Activated CD4-positive, alpha-beta T cell treated with anti-CD3 and anti-CD28 coated beads for 36 hours (primary cell): ENCODE measurements at regions of chr5 and their contacts with region 1.

Region 1: GRCh38 chr5:138503487-138504270 is 38.4 kb downstream of the EGR1 start:
- DNase-seq: peak; percentile 44
- ATAC-seq: peak; percentile 79
- H3K4me3 Mint-ChIP-seq: no peak overlapping the region
- H3K27ac Mint-ChIP-seq: no peak overlapping the region
- H3K4me1 Mint-ChIP-seq: no peaks in the 10 kb centered on the region
- H3K27me3 Mint-ChIP-seq: no peaks in the 10 kb centered on the region

Region 2: DNA sequence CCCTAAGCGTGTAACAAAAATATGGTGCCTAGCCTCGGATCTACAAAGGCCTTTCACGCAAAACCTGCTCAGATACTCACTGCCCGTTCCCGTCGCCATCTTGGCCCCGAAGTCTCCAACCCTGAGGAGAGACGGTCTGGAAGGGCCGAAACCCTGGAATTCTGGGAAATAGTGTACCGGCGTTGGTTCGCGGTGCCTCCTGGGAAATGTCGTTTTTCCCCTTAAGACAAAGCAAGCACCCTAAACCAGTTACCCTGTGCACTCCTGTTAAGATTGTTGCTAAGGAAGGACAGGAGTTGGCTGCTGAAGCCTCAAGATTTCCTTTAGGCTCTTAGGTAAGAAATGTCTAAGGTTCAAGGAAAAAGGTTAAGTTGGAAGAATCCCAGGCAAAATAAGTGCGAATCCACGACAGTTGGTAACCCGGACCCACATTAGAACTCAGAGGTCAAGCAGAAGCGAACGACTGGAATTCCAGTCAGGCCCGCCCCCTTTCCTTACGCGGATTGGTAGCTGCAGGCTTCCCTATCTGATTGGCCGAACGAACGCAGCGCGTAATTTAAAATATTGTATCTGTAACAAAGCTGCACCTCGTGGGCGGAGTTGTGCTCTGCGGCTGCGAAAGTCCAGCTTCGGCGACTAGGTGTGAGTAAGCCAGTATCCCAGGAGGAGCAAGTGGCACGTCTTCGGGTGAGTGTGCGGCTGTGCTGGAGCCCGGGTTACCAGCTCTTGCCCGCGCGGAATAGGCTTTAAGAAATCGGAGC is 325.0 kb before region 1 on chr5 and contains the starts of genes BRD8 and KIF20A:
- CTCF ChIA-PET with region 1: interaction called, 3 read pairs
- POLR2A ChIA-PET with region 1: no interaction called
- intact Hi-C with region 1: loop called in 1 of 2 experiments (anchors 1 kb)
- DNase-seq: peak; percentile 96
- ATAC-seq: peak; percentile 93
- H3K4me3 Mint-ChIP-seq: no peak within 1 kb of the TSS
- H3K27ac Mint-ChIP-seq: peak within 1 kb of the TSS; percentile 73
- H3K4me1 Mint-ChIP-seq: peaks cover 16% of the 10 kb centered on the region
- H3K27me3 Mint-ChIP-seq: no peaks in the 10 kb centered on the region
- total RNA-seq, gene BRD8: 60.7 to 61.4 TPM
- total RNA-seq, gene KIF20A: 66.6 to 76.3 TPM

Region 3: DNA sequence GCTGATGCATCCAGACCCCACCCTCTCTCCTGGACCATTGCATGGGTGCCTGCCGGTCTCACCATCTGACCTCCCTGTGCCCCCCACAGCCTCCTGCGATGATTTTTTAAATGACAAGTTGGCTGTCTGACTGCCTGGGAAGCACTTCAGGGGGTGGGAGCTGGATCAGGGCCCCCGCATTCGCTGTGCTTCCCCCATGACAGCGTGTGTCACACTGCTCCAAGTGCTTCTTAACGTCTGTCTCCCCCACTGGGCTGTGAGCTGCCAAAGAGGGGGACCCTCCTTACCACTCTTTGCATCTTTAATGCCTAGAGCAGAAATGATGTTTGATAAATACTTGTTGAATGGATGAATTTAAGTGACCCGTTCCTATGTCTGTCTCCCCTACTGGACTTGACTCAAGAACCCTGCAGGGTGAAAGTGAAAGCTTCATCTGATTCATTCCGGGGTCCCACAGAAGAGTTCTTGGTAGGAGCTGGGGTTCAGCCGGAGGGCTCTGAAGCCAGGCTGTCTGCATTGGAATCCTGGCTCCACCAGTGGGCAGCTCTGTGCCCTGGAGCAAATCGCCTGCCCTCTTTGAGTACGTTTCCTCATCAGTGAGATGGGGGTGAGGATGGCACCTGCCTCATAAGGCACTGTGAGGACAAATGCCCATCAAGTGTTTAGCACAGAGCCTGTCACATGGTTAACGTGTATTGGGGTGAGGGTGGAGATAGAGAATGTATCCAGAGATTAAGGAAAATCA is 46.0 kb before region 1 on chr5:
- CTCF ChIA-PET with region 1: interaction called, 62 read pairs
- POLR2A ChIA-PET with region 1: no interaction called
- intact Hi-C with region 1: no loop called
- DNase-seq: peak; percentile 26
- ATAC-seq: no peak
- H3K4me3 Mint-ChIP-seq: peak overlapping the region; percentile 32
- H3K27ac Mint-ChIP-seq: peak overlapping the region; percentile 73
- H3K4me1 Mint-ChIP-seq: peaks cover 44% of the 10 kb centered on the region
- H3K27me3 Mint-ChIP-seq: no peaks in the 10 kb centered on the region

Region 4: DNA sequence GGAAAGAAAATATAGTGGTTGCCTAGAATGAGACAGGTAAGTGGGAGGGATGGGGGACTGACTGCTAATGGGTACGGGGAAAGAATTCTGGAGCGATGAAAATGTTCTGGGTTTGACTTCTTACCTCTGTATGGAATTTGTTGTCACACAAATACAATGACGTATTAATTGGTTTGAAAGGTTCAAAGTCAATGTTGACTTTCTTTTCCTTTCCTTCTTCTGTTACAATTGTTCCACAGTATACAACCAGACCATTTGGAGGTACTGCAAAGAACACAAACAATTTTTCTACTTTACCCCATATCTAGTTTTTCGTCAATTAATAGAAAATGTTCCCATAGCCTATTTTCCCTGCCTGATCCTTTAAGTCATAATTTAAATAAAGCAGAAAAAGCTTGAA is 13.8 kb after region 1 on chr5:
- CTCF ChIA-PET with region 1: interaction called, 12 read pairs
- POLR2A ChIA-PET with region 1: no interaction called
- intact Hi-C with region 1: no loop called
- DNase-seq: no peak
- ATAC-seq: no peak
- H3K4me3 Mint-ChIP-seq: no peak overlapping the region
- H3K27ac Mint-ChIP-seq: no peak overlapping the region
- H3K4me1 Mint-ChIP-seq: peaks cover 14% of the 10 kb centered on the region
- H3K27me3 Mint-ChIP-seq: no peaks in the 10 kb centered on the region